ENCODE measurements at regions of chr5 and their contacts with region 1.

Region 1: DNA sequence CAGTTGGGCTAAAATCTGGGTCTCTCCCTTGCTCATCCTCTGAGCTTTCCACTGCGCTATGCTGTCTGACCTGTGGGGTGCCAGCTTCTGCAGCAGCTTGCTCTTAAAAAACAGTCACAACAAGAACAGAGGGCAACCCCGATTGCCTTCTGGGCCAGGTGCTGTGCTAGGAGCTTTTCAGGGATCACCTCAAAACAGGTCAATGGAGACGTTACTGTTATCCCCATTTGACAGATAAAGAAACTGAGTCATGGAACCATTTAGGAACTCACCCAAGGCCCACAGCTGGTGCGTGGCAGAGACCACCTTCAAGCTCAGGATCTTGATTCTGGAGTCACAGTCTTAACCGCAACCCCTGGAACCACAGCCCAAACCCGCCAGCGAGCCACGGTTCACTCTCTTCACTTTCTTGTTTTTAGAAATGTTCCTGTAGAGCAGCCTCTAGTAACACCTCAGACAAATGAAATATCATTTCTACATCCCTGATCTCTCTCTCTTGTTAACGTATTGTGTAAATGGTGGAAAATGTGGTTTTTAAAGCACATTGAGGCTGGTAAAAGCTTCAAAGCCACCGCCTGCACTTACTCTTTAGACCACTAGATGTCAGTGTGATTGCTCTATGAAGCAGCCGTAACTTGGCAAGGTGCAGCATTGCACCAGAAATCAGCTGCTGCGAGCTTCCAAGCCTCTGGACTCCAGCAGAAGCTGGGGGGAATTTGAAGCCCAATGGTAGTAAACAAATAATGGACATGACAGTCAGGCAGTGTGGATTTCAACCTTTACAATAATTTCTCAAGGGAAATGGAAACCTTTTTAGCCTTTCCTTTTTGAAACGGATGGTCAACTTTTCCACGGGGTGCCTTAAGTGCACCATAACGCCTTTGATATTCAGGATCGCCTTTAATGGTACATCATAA is 1.7 kb downstream of the FYB1 start:
- H3K4me3 ChIP-seq: no peak overlapping the region
- H3K27ac ChIP-seq: no peak overlapping the region
- H3K4me1 ChIP-seq: no peaks in the 10 kb centered on the region
- CTCF ChIP-seq: peak; percentile 80

Region 2: DNA sequence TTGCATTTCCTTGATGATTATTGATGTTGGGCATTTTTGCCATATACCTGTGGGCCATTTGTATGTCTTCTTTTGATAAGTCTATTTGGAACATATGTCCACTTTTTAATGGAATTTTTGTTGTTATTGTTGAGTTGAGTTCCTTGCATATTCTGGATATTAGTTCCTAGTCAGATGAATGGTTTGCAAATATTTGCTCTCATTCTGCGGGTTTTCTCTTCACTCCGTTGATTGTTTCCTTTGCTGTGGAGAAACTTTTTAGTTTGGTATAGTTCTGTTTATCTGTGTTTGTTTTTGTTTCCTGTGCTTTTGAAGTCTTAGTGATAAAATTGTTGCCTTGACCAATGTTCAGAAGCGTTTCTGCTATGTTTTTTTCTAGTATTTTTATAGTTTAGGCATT is 358.8 kb before region 1 on chr5:
- CTCF ChIA-PET with region 1: no interaction called
- POLR2A ChIA-PET with region 1: no interaction called
- H3K4me3 ChIP-seq: no peak overlapping the region
- H3K27ac ChIP-seq: no peak overlapping the region
- H3K4me1 ChIP-seq: no peaks in the 10 kb centered on the region
- CTCF ChIP-seq: no peak

Region 3: GRCh38 chr5:39080597-39081204 is 136.9 kb before region 1 on chr5:
- CTCF ChIA-PET with region 1: interaction called, 12 read pairs
- POLR2A ChIA-PET with region 1: no interaction called
- H3K4me3 ChIP-seq: no peak overlapping the region
- H3K27ac ChIP-seq: no peak overlapping the region
- H3K4me1 ChIP-seq: peaks cover 8% of the 10 kb centered on the region; the same call in 1 of the 2 replicates
- CTCF ChIP-seq: peak; percentile 52

Region 4: DNA sequence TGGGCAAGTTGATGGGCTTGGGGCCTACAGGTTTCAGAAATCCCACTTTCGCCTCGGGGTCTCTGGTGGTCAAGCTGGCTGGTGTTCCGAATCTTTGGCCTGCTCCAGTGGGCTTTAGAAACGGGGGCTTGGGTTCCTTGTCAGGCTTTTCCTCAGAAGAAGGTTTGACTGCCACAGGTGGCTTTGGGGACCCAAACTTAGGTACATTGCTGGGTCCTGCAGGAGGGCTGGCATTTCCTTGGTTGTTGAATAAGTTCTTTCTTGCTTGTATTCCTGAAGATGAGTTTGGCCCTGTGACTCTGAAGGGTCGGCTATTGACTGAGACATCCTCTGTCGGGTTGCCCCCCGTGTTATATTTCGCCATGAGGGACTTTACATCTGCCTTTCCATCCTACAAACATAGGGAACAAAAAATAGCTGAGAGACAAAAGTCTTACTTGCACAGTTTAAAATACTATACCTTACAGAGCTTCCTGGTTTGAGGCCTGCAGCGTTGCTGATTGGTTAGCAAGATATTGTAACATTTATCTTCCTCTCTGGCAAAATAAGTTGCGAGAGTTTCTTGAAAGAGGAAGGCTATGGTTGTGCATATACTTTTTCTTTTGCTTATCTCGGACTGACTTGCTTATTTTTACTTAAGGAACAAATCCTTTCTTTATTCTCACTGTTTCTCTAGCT is 14.9 kb before region 1 on chr5:
- CTCF ChIA-PET with region 1: interaction called, 17 read pairs
- POLR2A ChIA-PET with region 1: no interaction called
- H3K4me3 ChIP-seq: no peak overlapping the region
- H3K27ac ChIP-seq: no peak overlapping the region
- H3K4me1 ChIP-seq: no peaks in the 10 kb centered on the region
- CTCF ChIP-seq: no peak

Region 5: GRCh38 chr5:39240750-39241149 is 23.1 kb after region 1 on chr5:
- CTCF ChIA-PET with region 1: interaction called, 13 read pairs
- POLR2A ChIA-PET with region 1: no interaction called
- H3K4me3 ChIP-seq: no peak overlapping the region
- H3K27ac ChIP-seq: no peak overlapping the region
- H3K4me1 ChIP-seq: no peaks in the 10 kb centered on the region; the same call in 1 of the 2 replicates
- CTCF ChIP-seq: no peak

Region 6: GRCh38 chr5:39376293-39376714 is 158.7 kb after region 1 on chr5:
- CTCF ChIA-PET with region 1: interaction called, 17 read pairs
- POLR2A ChIA-PET with region 1: no interaction called
- H3K4me3 ChIP-seq: no peak overlapping the region
- H3K27ac ChIP-seq: no peak overlapping the region
- H3K4me1 ChIP-seq: no peaks in the 10 kb centered on the region
- CTCF ChIP-seq: peak; percentile 64

Region 7: GRCh38 chr5:39570403-39571027 is 352.9 kb after region 1 on chr5:
- CTCF ChIA-PET with region 1: interaction called, 19 read pairs
- POLR2A ChIA-PET with region 1: no interaction called
- H3K4me3 ChIP-seq: no peak overlapping the region
- H3K27ac ChIP-seq: no peak overlapping the region
- H3K4me1 ChIP-seq: no peaks in the 10 kb centered on the region
- CTCF ChIP-seq: no peak